Activated T-helper 1 cell treated with anti-CD3 and anti-CD28 coated beads, Interleukin-12 subunit alpha, Interleukin-12 subunit beta, Interleukin-2, Interleukin-4 antibody, amounts not matched to agents 30 ng/mL and 10 ng/mL and 1 ng/mL, durations not matched to agents 14 hours and 24 hours and 36 hours (primary cell): ENCODE measurements at regions of chr3 and their contacts with region 1.

Region 1: GRCh38 chr3:97793420-97794019 is 28.3 kb upstream of the CRYBG3 start:
- DNase-seq: peak; percentile 6
- H3K4me3 Mint-ChIP-seq: no peak overlapping the region
- H3K27ac Mint-ChIP-seq: no peak overlapping the region
- H3K4me1 Mint-ChIP-seq: no peaks in the 10 kb centered on the region
- H3K27me3 Mint-ChIP-seq: no peaks in the 10 kb centered on the region

Region 2: DNA sequence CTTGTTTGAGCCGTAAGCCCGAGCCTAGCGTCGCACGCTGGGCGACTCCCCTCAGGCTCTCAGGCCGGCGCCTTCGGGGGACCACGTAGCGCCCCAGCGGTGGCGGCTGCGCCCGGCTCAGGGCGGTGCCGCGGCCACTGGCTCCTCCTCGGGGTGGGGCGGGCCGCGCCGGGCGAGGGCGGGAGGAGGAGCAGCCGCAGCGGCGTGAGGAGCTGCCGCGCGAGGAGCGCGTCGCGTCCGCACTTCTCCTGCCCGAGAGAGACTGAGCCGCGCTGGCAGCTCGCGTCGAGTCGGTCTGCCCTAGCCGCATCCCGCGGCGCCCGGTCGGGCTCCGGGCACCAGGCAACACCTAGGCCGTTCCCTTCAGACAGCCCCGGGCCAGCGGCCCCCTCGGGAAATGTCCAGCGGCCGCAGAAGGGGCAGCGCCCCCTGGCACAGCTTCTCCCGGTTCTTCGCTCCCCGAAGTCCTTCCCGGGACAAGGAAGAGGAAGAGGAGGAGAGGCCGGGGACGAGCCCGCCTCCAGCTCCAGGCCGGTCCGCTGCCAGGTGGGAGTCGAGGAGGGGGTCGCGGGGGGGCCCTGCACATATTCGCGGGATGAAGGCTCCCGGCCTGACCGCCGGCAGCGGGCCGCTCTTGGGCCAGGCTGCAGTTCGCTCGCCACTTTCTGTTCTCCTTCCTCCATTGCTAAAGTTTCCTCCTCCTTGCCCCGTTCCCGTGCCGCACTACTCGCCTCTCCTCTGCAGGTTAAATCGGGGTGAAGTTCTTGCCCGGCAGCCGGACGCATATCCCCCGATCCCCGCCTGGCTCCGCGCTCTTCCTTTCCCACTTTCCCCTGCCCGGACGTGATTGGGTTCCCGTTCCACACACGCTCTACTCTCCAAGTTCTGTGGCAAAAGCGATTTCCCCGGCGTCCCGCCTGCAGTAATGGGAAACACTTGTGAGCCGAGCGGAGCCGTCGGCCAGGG is 28.6 kb after region 1 on chr3 and contains the start of gene CRYBG3:
- intact Hi-C with region 1: loop called (anchors 1 kb)
- DNase-seq: peak; percentile 86
- H3K4me3 Mint-ChIP-seq: peak within 1 kb of the TSS; percentile 99
- H3K27ac Mint-ChIP-seq: peak within 1 kb of the TSS; percentile 92
- H3K4me1 Mint-ChIP-seq: peaks cover 40% of the 10 kb centered on the region
- H3K27me3 Mint-ChIP-seq: peaks cover 34% of the 10 kb centered on the region
- total RNA-seq, gene CRYBG3: 6.5 and 6.8 TPM in 2 replicates

Region 3: GRCh38 chr3:97838393-97838792 is 44.9 kb after region 1 on chr3:
- intact Hi-C with region 1: no loop called
- DNase-seq: no peak
- H3K4me3 Mint-ChIP-seq: no peak overlapping the region
- H3K27ac Mint-ChIP-seq: no peak overlapping the region
- H3K4me1 Mint-ChIP-seq: peaks cover 6% of the 10 kb centered on the region
- H3K27me3 Mint-ChIP-seq: no peaks in the 10 kb centered on the region

Region 4: GRCh38 chr3:97927654-97928053 is 134.1 kb after region 1 on chr3:
- intact Hi-C with region 1: no loop called
- DNase-seq: no peak
- H3K4me3 Mint-ChIP-seq: no peak overlapping the region
- H3K27ac Mint-ChIP-seq: no peak overlapping the region
- H3K4me1 Mint-ChIP-seq: no peaks in the 10 kb centered on the region
- H3K27me3 Mint-ChIP-seq: no peaks in the 10 kb centered on the region

Region 5: DNA sequence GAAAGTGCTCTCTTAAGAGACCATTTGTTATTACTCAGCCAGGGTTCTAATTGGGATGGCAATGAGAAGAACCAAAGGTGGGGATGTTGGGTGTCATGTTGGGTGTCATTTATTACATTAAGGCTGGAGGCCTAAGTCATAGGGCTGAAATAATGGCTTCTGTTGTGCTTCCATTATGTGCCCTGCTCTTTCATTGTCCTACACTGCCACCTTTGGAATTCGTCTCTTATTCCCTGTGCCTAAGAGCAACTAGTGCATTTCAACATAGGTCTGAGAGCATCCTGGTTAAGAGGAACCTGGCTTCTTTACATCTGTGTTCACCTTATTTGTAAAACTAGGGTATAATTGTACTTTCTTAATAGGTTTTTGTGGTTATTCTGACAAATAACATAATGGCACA is 146.5 kb after region 1 on chr3:
- intact Hi-C with region 1: loop called (anchors 2 kb)
- DNase-seq: no peak
- H3K4me3 Mint-ChIP-seq: no peak overlapping the region
- H3K27ac Mint-ChIP-seq: no peak overlapping the region
- H3K4me1 Mint-ChIP-seq: peaks cover 23% of the 10 kb centered on the region
- H3K27me3 Mint-ChIP-seq: no peaks in the 10 kb centered on the region